ENCODE measurements at regions of chr19 and their contacts with region 1.

Region 1: DNA sequence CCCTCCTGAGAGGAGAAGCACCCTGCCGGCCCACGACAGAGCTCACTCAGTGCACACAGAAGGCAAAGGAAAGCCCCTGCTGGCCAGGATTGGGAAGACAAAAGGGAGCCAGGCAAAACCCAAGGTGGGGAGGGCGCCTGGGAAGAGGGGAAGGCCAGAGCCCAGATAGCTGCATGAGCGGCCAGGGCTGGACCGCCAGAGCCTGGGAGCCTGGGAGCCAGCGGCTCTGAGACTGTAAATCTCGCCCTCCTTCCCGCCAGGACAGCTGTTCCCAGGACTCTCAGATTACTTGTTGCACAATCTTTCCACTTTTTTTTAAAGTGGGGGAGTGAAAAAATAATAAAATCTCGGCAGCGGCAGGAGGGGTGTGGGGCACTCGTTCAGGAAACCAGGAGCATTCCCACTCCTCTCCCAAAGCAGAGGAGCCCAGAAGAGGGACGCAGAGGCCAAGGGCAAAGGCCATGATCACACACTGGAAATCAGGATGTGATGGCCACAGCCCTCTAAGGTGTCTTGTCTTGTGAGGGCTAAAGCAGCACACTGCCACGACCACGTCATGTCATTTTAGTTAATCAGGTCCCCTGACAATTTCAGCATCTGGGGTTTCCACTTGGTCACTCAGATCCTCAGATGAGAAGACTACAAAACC is 19.6 kb upstream of the EPHX3 start:
- DNase-seq: peak; percentile 93
- H3K4me3 ChIP-seq: peak overlapping the region in 1 of 2 donors; percentile 21
- H3K27ac ChIP-seq: peak overlapping the region; percentile 83 to 89
- H3K4me1 ChIP-seq: peaks cover 36 to 58% of the 10 kb centered on the region in 2 donors
- H3K27me3 ChIP-seq: no peaks in the 10 kb centered on the region
- CTCF ChIP-seq: peak; percentile 38 to 74 (median 51)
- POLR2A ChIP-seq: peak in 1 of 2 donors; percentile 25

Region 2: DNA sequence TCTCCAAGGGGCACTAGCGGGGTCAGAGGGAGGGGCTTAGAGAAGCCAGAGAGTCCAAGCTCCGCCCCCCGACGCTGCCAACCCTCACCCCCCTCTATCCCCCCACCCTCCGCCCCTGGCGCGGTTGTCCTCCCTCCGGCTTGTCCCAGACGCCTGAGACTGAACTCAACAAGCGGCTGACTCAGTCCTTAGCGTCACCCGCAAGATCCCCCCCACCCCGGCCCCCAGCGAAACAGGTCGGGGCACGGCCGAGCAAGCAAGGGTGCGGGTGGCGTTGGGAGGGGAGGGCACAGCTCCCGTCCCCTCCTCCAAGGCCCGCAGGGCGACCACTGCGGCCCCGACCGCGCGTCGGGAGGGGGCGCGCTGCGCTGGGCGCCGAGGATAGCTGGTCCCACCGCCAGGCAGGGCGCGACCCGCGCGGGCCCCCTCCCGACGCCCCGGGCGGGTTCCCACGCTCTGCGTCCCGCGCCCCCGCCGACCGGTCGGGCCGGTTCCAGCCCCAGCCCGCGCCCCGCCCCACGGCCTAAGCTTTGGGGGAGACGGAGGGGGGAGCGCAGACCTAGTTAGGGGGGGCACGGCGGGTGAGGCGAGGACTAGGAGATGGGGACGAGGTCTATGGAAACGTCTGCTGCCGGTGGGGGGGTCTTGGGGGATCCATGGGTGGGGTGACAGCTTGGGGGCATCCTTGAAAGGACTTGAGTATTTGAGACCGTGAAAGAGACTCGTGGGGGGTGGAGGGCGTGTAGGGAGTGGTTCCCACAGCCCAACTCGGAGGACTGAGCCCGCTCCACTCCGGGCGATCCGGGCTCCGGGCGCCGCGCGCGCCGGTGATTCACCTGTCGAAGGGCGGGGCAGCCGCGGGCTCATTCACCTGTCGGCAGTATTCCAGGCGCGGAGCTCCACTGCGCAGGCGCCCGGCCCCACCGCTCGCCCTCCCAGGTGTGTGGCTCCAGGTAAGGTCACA is 56.2 kb before region 1 on chr19:
- intact Hi-C with region 1: loop called (anchors 10 kb)
- DNase-seq: peak; percentile 53 to 55
- H3K4me3 ChIP-seq: peak overlapping the region; percentile 7 to 14
- H3K27ac ChIP-seq: peak overlapping the region; percentile 51 to 53
- H3K4me1 ChIP-seq: peaks cover 0 to 15% of the 10 kb centered on the region in 2 donors
- H3K27me3 ChIP-seq: no peaks in the 10 kb centered on the region
- CTCF ChIP-seq: peak in 2 of 4 experiments; percentile 30 to 38
- POLR2A ChIP-seq: no peak